WTC11 (cell line): ENCODE measurements at regions of chr20 and their contacts with region 1.

Region 1: GRCh38 chr20:50790651-50791277 is 4.1 kb upstream of the BCAS4 start:
- DNase-seq: peak; percentile 92
- ATAC-seq: peak; percentile 76
- H3K4me3 Mint-ChIP-seq: no peak overlapping the region
- H3K27ac Mint-ChIP-seq: 0 out of 2 replicates have a peak overlapping the region, but pooled peaks have one; percentile 53
- H3K4me1 Mint-ChIP-seq: peaks cover 26% of the 10 kb centered on the region
- H3K27me3 Mint-ChIP-seq: peaks cover 4% of the 10 kb centered on the region
- CTCF ChIP-seq: peak; percentile 35; the same call in 1 of the 2 replicates

Region 2: DNA sequence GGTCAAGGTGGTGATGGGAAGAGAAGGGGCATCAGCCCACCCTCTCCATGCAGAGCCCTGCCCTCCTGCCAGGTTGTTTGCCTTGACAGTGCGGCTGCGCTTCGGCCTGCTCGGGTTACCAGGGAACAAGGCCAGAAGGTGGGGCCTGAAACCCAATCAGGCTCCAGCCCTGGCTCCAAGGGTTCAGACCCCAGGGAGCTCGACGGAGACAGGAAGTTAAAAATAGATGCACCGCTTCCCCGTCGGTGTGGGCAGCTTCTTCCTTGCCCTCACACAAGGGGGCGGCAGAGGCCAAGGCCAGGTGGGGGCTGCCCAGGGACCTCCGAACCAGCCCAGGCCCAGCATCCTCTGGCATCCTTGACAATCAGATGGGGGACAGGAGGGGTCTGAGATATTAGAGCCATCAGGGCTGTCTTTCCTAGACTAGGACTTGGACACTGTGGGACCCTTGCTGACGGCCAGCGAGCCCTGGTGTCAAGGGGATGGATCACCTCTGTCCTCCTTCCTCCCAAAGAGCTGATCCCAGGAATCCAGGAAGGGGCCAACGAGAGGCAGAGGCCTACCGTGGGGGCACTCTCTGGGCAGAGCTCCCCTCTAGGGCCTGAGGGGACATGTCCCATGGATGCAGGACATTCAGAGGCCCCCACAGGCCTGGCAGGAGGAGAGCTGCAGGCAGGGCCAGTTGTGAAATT is 164.6 kb before region 1 on chr20:
- CTCF ChIA-PET with region 1: interaction called, 49 read pairs
- POLR2A ChIA-PET with region 1: interaction called, 3 read pairs
- DNase-seq: peak; percentile 91
- ATAC-seq: peak; percentile 95
- H3K4me3 Mint-ChIP-seq: no peak overlapping the region
- H3K27ac Mint-ChIP-seq: peak overlapping the region; percentile 53; the same call in 1 of the 2 replicates
- H3K4me1 Mint-ChIP-seq: peaks cover 18% of the 10 kb centered on the region
- H3K27me3 Mint-ChIP-seq: no peaks in the 10 kb centered on the region
- CTCF ChIP-seq: peak; percentile 67

Region 3: DNA sequence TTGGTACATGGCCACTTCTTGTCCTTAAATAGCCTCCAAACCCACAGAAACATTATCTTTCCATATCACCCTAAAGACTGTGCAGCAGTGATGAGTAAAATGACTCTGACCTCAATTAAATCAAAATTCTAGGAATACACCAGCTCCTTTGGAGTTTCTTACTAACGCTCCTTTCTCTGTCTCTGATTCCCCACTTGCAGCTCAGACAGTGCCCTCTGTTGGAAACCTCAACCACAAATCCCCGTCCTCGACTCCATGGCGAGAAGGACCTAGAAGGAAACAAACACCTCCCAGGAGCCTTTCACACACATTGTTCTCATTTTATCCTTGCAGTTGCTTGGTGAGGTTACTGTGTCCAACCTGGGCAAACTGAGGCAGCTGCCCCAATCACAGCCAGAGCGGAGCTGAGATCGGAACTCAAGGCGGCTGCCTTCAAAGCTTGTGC is 77.1 kb before region 1 on chr20:
- CTCF ChIA-PET with region 1: interaction called, 13 read pairs
- POLR2A ChIA-PET with region 1: interaction called, 8 read pairs
- DNase-seq: peak; percentile 35
- ATAC-seq: peak; percentile 73
- H3K4me3 Mint-ChIP-seq: no peak overlapping the region
- H3K27ac Mint-ChIP-seq: peak overlapping the region; percentile 55; the same call in 1 of the 2 replicates
- H3K4me1 Mint-ChIP-seq: peaks cover 37% of the 10 kb centered on the region
- H3K27me3 Mint-ChIP-seq: no peaks in the 10 kb centered on the region; the same call in none of the 2 replicates
- CTCF ChIP-seq: no peak

Region 4: GRCh38 chr20:50776122-50776817 is 14.5 kb before region 1 on chr20:
- CTCF ChIA-PET with region 1: interaction called, 11 read pairs
- POLR2A ChIA-PET with region 1: no interaction called
- DNase-seq: no peak
- ATAC-seq: peak; percentile 48; the same call in 1 of the 2 replicates
- H3K4me3 Mint-ChIP-seq: no peak overlapping the region
- H3K27ac Mint-ChIP-seq: peak overlapping the region; percentile 85
- H3K4me1 Mint-ChIP-seq: peaks cover 6% of the 10 kb centered on the region
- H3K27me3 Mint-ChIP-seq: no peaks in the 10 kb centered on the region
- CTCF ChIP-seq: no peak

Region 5: GRCh38 chr20:50848341-50848808 is 57.6 kb after region 1 on chr20:
- CTCF ChIA-PET with region 1: interaction called, 11 read pairs
- POLR2A ChIA-PET with region 1: interaction called, 4 read pairs
- DNase-seq: no peak
- ATAC-seq: no peak
- H3K4me3 Mint-ChIP-seq: no peak overlapping the region
- H3K27ac Mint-ChIP-seq: peak overlapping the region; percentile 83
- H3K4me1 Mint-ChIP-seq: peaks cover 30% of the 10 kb centered on the region
- H3K27me3 Mint-ChIP-seq: no peaks in the 10 kb centered on the region
- CTCF ChIP-seq: no peak

Region 6: GRCh38 chr20:50898475-50898874 is 107.7 kb after region 1 on chr20:
- CTCF ChIA-PET with region 1: interaction called, 11 read pairs
- POLR2A ChIA-PET with region 1: no interaction called
- DNase-seq: no peak
- ATAC-seq: no peak
- H3K4me3 Mint-ChIP-seq: no peak overlapping the region
- H3K27ac Mint-ChIP-seq: peak overlapping the region; percentile 32
- H3K4me1 Mint-ChIP-seq: no peaks in the 10 kb centered on the region
- H3K27me3 Mint-ChIP-seq: no peaks in the 10 kb centered on the region
- CTCF ChIP-seq: no peak

Region 7: GRCh38 chr20:50980851-50981713 is 190.3 kb after region 1 on chr20:
- CTCF ChIA-PET with region 1: interaction called, 17 read pairs
- POLR2A ChIA-PET with region 1: no interaction called
- DNase-seq: peak; percentile 74
- ATAC-seq: peak; percentile 75
- H3K4me3 Mint-ChIP-seq: 0 out of 2 replicates have a peak overlapping the region, but pooled peaks have one; percentile 29
- H3K27ac Mint-ChIP-seq: no peak overlapping the region
- H3K4me1 Mint-ChIP-seq: peaks cover 3% of the 10 kb centered on the region
- H3K27me3 Mint-ChIP-seq: peaks cover 5% of the 10 kb centered on the region; the same call in 1 of the 2 replicates
- CTCF ChIP-seq: peak; percentile 82

Region 8: DNA sequence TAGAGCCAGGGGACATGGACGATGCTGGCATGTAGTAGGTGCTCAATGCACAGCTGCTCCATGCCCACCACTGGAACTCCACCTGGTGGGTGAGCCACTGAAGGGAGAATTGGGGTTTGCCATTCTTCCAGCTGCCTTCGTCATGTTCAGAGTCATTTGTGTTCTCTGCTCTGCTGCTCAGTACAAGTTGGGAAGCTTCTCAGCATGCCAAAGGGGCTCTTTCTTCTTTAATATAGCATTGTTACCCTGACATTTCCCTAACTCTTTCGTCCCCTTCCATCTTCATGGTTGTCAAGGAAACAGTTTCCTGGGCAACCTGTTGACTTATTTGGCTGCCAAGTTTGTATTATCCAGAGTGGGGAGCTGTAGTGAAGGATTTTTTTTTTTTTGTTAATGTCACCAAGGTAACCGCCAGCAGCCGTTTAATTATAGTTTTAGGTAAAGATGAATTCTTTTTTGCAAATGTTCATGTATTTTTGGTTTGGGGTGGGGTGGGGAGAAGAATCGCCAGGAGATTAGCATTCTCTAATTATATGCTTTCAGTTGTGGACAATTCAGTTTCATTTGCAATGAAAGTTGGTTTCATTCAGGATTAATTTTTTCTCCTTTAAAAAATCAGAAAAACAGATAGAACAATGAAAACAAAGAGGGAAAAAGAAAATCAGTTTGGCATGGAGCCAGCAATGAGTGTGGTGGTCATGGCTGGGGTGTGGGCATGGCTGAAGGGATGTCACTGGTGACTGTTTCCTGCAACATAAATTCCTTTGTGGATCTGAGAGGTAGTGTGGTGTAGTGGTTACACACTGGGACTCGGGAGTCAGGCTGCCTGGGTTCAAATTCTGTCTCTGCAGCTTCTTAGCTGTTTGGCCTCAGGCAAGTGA is 305.1 kb after region 1 on chr20:
- CTCF ChIA-PET with region 1: no interaction called
- POLR2A ChIA-PET with region 1: no interaction called
- DNase-seq: no peak
- ATAC-seq: no peak
- H3K4me3 Mint-ChIP-seq: no peak overlapping the region
- H3K27ac Mint-ChIP-seq: no peak overlapping the region
- H3K4me1 Mint-ChIP-seq: peaks cover 24% of the 10 kb centered on the region
- H3K27me3 Mint-ChIP-seq: no peaks in the 10 kb centered on the region
- CTCF ChIP-seq: no peak